K562 (cell line): ENCODE measurements at regions of chr1 and their contacts with region 1.

Region 1: DNA sequence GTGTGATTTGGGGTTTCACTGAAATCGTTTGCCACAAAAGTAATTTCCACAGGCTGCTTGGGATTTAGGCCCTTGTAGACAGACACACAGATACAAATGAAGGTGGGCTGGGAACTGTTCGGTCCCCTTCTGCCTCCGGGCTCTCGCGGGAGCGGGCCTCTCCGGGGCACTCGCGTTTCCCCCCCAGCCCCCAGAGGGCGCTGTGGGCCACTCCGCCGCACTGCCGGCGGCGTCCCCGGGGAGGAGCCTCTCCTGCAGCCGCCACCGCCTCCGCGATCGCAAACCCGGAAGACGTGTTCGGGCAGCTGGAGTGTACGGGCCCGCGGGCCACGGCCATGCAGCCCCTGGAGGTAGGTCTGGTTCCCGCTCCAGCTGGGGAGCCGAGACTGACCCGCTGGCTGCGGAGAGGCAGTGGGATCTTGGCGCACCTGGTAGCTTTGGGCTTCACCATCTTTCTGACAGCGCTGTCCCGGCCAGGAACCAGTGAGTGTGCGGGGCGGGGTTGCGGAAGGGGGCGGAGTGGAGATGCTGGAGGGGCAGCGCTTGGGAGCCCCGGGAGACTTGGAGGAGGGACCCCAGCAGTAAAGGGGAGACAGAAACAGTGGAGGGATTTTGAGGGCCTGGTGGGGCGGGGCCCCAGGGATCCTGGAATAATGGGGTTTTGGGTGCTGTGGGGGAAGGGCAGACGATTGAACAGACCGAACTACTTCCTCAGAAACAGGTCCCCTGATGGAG is at the start of gene CYB561D1:
- DNase-seq: peak; percentile 93 to 95 (median 94)
- ATAC-seq: peak; percentile 96
- H3K4me3 ChIP-seq: peak within 1 kb of the TSS; percentile 91
- H3K27ac ChIP-seq: peak within 1 kb of the TSS; percentile 51
- H3K4me1 ChIP-seq: peaks cover 13 to 30% of the 10 kb centered on the region in 2 experiments; a peak in 4 of 5 replicates
- H3K27me3 ChIP-seq: no peaks in the 10 kb centered on the region
- CTCF ChIP-seq: peak; percentile 97 to 98 (median 97)
- EP300 ChIP-seq: no peak
- POLR2A ChIP-seq: peak; percentile 88
- RAD21 ChIP-seq: peak; percentile 76 to 80
- polyA plus RNA-seq, gene CYB561D1: 0.71 to 0.72 TPM

Region 2: DNA sequence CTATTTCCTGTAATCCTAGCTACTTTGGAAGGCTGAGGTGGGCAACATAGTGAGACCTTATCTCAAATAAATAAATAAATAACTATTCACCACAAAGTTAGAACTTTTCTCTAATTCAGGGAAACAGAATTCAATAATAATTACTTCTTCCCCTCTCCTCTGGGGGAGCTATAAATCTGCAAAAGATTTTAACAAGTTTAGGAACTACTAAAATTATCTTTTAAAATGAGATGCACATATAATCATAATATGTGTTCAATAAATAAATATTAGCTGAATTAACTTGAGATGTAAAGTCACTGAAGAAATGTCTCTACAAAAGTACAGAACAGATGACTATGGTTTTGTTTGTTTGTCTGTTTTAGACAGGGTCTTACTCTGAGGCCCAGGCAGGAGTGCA is 466.1 kb before region 1 on chr1:
- CTCF ChIA-PET with region 1: no interaction called
- POLR2A ChIA-PET with region 1: no interaction called
- in situ Hi-C with region 1: no loop called
- intact Hi-C with region 1: no loop called
- DNase-seq: no peak
- ATAC-seq: peak; percentile 20; the same call in 1 of the 3 replicates
- H3K4me3 ChIP-seq: no peak overlapping the region
- H3K27ac ChIP-seq: no peak overlapping the region
- H3K4me1 ChIP-seq: no peaks in the 10 kb centered on the region; a peak in 1 of 5 replicates
- H3K27me3 ChIP-seq: no peaks in the 10 kb centered on the region
- CTCF ChIP-seq: peak in 1 of 3 experiments; percentile 39; a peak in 3 of 6 replicates
- EP300 ChIP-seq: no peak
- POLR2A ChIP-seq: no peak
- RAD21 ChIP-seq: no peak

Region 3: DNA sequence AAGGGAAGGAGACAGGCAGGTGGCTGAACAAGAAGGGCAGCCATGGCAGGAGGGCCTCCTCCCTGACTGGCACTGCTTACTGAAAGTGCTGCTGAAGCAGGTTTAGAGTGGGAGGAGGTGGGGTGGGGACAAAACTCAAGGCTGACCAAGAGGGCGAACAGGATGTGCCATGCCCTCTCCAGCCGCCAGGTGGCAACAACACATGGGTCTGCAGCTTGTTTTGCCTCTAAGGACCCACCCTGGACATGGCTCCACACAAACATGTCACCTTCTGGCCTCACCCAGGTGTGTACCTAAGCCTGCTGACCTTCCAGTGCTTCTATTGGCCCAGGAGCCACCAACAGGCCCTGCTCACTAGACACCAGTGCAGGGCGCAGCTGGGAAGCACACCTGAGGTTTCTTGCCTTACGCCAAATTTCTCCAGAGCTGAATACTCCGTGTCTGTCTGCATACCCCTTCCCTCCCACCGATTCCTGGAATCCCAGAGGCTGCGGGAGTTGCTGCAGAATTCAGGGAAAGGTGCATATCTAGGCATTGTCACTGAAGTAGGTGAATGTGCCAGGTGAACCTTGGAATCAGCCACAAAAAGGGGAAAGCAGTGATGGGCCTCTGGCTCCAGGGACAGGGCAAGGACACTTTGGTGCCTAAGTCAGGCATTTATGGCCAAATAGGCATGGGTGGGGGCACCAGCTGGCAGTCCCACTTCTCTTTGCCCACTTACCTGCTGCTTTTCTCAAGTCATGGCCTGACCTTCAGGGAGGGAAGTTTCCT is 216.4 kb before region 1 on chr1:
- CTCF ChIA-PET with region 1: no interaction called
- POLR2A ChIA-PET with region 1: no interaction called
- in situ Hi-C with region 1: no loop called
- intact Hi-C with region 1: loop called (anchors 5 kb)
- DNase-seq: peak; percentile 91 to 94 (median 92)
- ATAC-seq: peak; percentile 90
- H3K4me3 ChIP-seq: no peak overlapping the region
- H3K27ac ChIP-seq: peak overlapping the region; percentile 51
- H3K4me1 ChIP-seq: peaks cover 63 to 65% of the 10 kb centered on the region in 2 experiments
- H3K27me3 ChIP-seq: no peaks in the 10 kb centered on the region
- CTCF ChIP-seq: peak; percentile 95 to 99 (median 97)
- EP300 ChIP-seq: no peak; the same call in 1 of the 2 replicates
- POLR2A ChIP-seq: no peak
- RAD21 ChIP-seq: peak; percentile 89 to 98

Region 4: GRCh38 chr1:109509176-109510134 is 15.5 kb after region 1 on chr1 and contains the start of gene AMIGO1:
- CTCF ChIA-PET with region 1: no interaction called
- POLR2A ChIA-PET with region 1: interaction called, 24 read pairs
- in situ Hi-C with region 1: no loop called
- intact Hi-C with region 1: no loop called
- DNase-seq: peak; percentile 75 to 96 (median 92)
- ATAC-seq: peak; percentile 77
- H3K4me3 ChIP-seq: peak within 1 kb of the TSS; percentile 48
- H3K27ac ChIP-seq: no peak within 1 kb of the TSS
- H3K4me1 ChIP-seq: peaks cover 0 to 19% of the 10 kb centered on the region in 2 experiments; a peak in 4 of 5 replicates
- H3K27me3 ChIP-seq: peaks cover 13 to 45% of the 10 kb centered on the region in 2 experiments
- CTCF ChIP-seq: no peak
- EP300 ChIP-seq: no peak
- POLR2A ChIP-seq: no peak
- RAD21 ChIP-seq: no peak
- polyA plus RNA-seq, gene AMIGO1: 0.24 to 0.31 TPM